Ascending aorta (tissue), 2 donors: ENCODE measurements at regions of chr12 and their contacts with region 1.

Region 1: DNA sequence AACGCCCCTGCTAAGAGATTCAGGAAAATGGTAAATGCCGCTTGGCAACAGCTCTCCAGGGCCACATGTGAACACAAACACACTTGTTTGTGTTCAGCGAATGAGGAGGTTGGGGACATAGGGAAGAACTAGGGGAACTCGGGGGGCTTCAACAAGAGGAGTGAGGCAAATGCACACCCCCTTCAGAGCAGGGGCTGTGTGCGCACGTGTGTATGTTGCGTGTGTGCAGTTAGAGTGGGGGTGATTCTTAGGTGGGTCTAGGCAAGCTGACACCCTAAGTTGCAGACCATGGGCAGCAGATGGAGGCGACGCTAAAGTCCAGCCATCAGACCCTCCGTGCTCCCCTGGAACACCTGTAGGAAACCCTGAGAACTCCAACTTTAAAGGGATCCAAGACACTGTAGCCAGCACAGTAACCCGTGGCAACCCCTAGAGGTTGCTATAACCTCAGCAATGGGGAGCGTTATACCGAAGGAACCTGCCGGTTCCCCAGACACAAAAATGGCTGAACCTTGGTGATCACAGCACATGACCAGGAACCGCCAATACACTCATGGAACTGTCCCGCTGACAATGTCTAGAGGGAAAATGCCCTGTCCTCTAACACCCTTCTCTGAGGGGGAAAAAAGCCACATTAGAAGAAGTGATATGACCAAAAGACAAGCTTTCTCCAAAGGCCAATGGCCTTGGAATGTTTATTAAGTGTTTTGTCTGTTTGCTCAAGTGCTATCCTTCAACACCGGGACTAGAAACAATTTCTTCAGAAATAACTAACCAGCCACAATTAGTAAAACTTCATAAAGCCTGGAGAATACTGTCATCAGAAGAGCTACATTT is 86.5 kb upstream of the CEP83 start:
- DNase-seq: no peak
- H3K4me3 ChIP-seq: no peak overlapping the region
- H3K27ac ChIP-seq: no peak overlapping the region
- H3K4me1 ChIP-seq: no peaks in the 10 kb centered on the region
- H3K27me3 ChIP-seq: no peaks in the 10 kb centered on the region
- CTCF ChIP-seq: peak; percentile 47 to 70 (median 56)

Region 2: GRCh38 chr12:94762259-94762942 is 216.2 kb after region 1 on chr12:
- intact Hi-C with region 1: loop called (anchors 5 kb)
- DNase-seq: no peak
- H3K4me3 ChIP-seq: no peak overlapping the region
- H3K27ac ChIP-seq: no peak overlapping the region
- H3K4me1 ChIP-seq: peaks cover 0 to under 1% of the 10 kb centered on the region in 2 donors
- H3K27me3 ChIP-seq: no peaks in the 10 kb centered on the region
- CTCF ChIP-seq: no peak

Region 3: DNA sequence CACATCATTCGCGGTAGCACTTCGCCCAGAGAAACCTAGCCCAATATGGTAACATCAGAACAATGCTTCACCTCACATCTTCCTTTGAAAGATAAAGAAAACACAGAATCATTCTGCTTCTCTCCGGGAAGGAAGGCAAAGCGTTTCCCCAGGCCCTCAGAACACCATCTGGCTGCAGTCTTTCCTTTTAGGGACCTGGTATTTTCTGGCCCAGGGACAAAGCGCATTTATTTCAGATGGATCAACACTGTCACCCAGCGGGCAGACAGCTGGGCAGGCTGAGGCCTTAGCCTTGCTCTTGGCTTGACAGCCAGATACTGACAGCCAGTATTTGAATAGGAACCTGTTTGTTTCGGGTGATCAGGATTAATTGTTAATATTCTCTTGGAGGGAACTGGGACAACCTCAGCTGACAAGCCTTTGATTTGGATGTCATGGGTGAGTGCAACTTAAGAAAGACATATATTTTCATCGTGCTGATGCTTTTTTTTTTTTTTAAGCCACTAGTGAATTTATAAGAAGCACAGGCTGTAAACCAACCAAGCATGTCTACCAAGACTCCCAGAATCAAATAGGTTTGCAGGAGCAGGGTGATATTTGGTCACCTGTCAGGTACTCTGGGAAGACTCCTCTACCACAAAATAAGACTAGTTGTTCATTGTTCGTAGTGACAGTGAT is 790.4 kb after region 1 on chr12:
- intact Hi-C with region 1: loop called (anchors 2 kb)
- DNase-seq: peak in 1 of 2 donors; percentile 82
- H3K4me3 ChIP-seq: peak overlapping the region in 1 of 2 donors; percentile 5
- H3K27ac ChIP-seq: peak overlapping the region; percentile 59 to 78
- H3K4me1 ChIP-seq: peaks cover 0 to 5% of the 10 kb centered on the region in 2 donors
- H3K27me3 ChIP-seq: no peaks in the 10 kb centered on the region
- CTCF ChIP-seq: peak; percentile 78 to 97 (median 85)